ENCODE measurements at regions of chr7 and their contacts with region 1.

Region 1: GRCh38 chr7:138886501-138886917 is 88.5 kb upstream of the ATP6V0A4 start:
- DNase-seq: peak; percentile 74
- H3K4me3 ChIP-seq: no peak overlapping the region
- H3K27ac ChIP-seq: no peak overlapping the region
- H3K4me1 ChIP-seq: peaks cover 25% of the 10 kb centered on the region
- H3K27me3 ChIP-seq: no peaks in the 10 kb centered on the region

Region 2: GRCh38 chr7:139075031-139075652 is 188.6 kb after region 1 on chr7:
- in situ Hi-C with region 1: loop called (anchors 25 kb)
- DNase-seq: peak; percentile 88
- H3K4me3 ChIP-seq: no peak overlapping the region
- H3K27ac ChIP-seq: peak overlapping the region; percentile 45
- H3K4me1 ChIP-seq: peaks cover 6% of the 10 kb centered on the region
- H3K27me3 ChIP-seq: no peaks in the 10 kb centered on the region

Measured in GM23248 (cell line).